PC-3 (cell line): ENCODE measurements at regions of chr10 and their contacts with region 1.

Region 1: DNA sequence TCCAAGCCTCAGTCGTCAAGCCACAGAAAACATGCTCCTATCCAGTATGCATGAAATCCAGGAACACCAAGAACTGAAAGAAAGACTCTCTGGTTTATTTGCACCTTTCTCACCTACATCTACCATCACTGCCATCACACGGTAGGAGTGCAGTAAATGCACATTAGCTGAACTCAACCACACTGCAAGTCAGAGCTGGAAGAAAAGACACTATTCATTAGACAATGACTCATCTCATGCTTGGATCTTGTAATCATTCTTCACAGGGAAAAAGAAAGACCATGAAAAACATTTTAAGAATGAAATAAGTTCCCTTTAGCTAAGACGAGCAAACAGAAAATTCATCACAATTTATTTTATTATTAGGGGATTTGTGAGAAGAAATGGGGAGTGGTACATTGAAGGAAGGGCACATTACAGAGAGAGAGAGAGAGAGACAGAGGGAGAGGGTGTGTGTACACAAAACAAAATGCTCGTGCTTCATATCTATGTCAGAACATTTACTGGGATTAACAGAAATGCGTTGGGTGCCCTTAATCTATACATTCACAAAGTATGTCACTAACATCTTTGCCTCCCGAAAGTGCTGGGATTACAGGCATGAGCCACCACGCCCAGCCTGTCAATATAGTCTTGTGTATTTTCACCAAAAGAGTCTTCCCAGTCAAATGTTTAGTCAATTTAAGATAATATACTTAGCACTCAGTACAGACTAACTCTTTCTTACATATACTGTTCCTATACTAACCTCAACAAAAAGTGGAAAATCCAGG is 324.9 kb downstream of the PARD3 start:
- DNase-seq: peak; percentile 87
- ATAC-seq: peak; percentile 85
- H3K4me3 ChIP-seq: no peak overlapping the region
- H3K27ac ChIP-seq: peak overlapping the region; percentile 14
- H3K4me1 ChIP-seq: peaks cover 27% of the 10 kb centered on the region
- H3K27me3 ChIP-seq: no peaks in the 10 kb centered on the region
- CTCF ChIP-seq: peak; percentile 41; the same call in 1 of the 2 replicates

Region 2: DNA sequence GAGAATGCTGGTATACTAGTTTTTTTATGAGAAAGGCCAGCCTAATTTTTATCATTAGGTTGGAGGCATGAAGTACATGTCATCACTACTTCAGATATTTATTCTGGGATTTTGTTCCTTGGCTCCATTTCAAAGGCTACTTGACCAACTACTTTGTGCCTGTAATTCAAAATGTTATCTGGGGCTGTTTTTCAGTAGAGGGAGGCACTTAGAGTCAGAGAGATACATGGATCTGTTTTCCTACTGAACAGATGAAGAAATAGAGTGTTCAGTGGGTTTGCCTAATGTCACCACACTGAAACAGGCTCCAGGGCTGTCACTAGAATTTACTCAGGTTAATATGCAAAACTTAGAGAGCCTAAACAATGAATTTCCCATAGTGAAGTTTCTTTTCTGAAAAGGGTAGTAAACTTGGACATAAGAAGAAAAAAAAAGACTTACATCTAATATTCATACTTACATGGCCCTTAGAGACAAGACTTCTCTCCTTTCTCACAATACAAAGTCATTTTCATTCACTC is 1404.8 kb before region 1 on chr10:
- CTCF ChIA-PET with region 1: no interaction called
- POLR2A ChIA-PET with region 1: interaction called, 21 read pairs
- intact Hi-C with region 1: no loop called
- DNase-seq: no peak
- ATAC-seq: no peak
- H3K4me3 ChIP-seq: no peak overlapping the region
- H3K27ac ChIP-seq: no peak overlapping the region
- H3K4me1 ChIP-seq: no peaks in the 10 kb centered on the region
- H3K27me3 ChIP-seq: no peaks in the 10 kb centered on the region
- CTCF ChIP-seq: no peak

Region 3: GRCh38 chr10:34319197-34319866 is 170.8 kb before region 1 on chr10:
- CTCF ChIA-PET with region 1: no interaction called
- POLR2A ChIA-PET with region 1: interaction called, 14 read pairs
- intact Hi-C with region 1: no loop called
- DNase-seq: peak; percentile 100
- ATAC-seq: peak; percentile 95
- H3K4me3 ChIP-seq: no peak overlapping the region
- H3K27ac ChIP-seq: peak overlapping the region; percentile 41
- H3K4me1 ChIP-seq: peaks cover 34% of the 10 kb centered on the region
- H3K27me3 ChIP-seq: no peaks in the 10 kb centered on the region
- CTCF ChIP-seq: no peak